Common myeloid progenitor, CD34-positive (primary cell): ENCODE measurements at regions of chr3 and their contacts with region 1.

Region 1: DNA sequence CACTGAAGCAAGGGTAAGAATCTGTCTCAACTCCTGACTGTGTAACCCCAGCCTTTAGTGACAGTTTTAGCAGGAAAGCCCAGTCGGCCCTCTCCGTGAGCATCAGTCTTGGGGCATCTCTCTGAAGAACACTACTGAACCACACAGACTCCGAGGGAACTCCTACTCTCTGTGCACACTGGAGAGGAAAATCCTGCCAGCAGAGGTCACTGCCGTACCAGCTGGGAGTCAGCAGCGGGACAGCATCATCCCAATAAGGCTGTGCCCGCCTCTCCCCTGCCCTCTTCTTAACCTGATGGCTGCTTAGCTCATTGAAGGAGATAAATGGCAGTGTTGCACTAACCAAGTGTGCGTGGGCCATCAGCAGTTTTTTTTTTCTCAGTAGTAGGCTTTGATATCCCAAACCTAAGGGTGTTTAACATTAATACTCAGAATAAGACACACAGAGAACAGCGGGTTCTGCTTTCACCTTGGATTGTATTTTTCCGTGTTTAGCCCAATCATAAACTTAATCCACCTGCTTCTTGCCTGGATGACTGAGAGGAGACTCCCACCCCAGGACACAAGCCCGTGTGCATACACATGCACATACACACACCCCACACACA is 26.6 kb upstream of the RASA2 start:
- DNase-seq: peak; percentile 82 to 91 (median 86)
- H3K4me3 ChIP-seq: no peak overlapping the region
- H3K27ac ChIP-seq: no peak overlapping the region
- H3K4me1 ChIP-seq: no peaks in the 10 kb centered on the region
- H3K27me3 ChIP-seq: no peaks in the 10 kb centered on the region

Region 2: GRCh38 chr3:141311496-141312353 is 148.5 kb before region 1 on chr3:
- CTCF ChIA-PET with region 1: interaction called, 240 read pairs
- POLR2A ChIA-PET with region 1: no interaction called
- DNase-seq: peak; percentile 98 to 99 (median 98)
- H3K4me3 ChIP-seq: peak overlapping the region; percentile 82 to 93 (median 85)
- H3K27ac ChIP-seq: peak overlapping the region; percentile 30 to 74
- H3K4me1 ChIP-seq: peaks cover 4 to 21% (median 19%) of the 10 kb centered on the region in 4 experiments
- H3K27me3 ChIP-seq: no peaks in the 10 kb centered on the region

Region 3: DNA sequence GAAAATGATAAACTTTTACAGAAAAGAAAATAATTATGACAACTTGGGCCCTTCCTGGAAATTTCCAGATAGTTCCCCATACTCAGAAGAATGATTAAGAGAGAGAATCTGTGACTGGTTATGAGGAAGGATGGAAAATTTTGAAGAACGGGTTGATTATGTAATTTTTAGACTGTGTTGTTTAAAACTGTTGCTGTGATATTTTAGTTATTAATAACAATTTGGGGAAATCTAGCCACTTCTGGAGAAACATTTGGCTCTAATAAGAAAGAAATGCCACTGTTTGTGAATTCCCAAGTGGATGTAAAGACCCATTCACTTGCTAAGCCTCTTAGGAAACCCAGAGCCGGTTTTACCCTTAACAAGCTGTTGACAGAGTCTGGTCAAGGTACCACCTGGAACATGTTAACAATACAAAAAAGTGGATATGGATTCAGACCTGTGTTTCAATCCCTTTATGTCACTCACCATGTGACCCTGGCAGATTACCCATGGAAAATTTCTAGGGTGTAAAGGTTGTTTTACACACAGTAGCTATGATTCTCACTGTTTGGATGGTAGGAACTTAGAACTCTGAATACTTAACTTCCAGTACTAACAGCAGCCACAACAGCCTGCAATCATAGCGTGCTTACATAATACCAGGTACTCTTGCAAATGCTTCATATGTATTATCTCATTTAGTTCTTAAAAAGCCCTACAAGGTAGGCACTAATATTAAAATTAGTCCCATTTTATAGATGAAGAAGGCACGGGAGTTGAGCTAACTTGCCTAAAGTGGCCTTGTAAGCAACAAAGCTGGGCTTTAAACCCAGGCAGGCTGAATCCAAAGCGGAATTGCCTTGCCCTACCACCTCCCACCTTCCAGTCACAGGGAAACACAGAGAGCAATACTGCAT is 59.9 kb before region 1 on chr3:
- CTCF ChIA-PET with region 1: no interaction called
- POLR2A ChIA-PET with region 1: no interaction called
- DNase-seq: no peak
- H3K4me3 ChIP-seq: no peak overlapping the region
- H3K27ac ChIP-seq: no peak overlapping the region
- H3K4me1 ChIP-seq: peaks cover 5 to 21% (median 11%) of the 10 kb centered on the region in 4 experiments
- H3K27me3 ChIP-seq: no peaks in the 10 kb centered on the region

Region 4: GRCh38 chr3:141476033-141476432 is 15.8 kb after region 1 on chr3:
- CTCF ChIA-PET with region 1: interaction called, 71 read pairs
- POLR2A ChIA-PET with region 1: no interaction called
- DNase-seq: peak in 2 of 3 donors; percentile 77 to 81
- H3K4me3 ChIP-seq: peak overlapping the region in 1 of 7 experiments; percentile 36
- H3K27ac ChIP-seq: no peak overlapping the region
- H3K4me1 ChIP-seq: peaks cover 13 to 28% (median 20%) of the 10 kb centered on the region in 4 experiments
- H3K27me3 ChIP-seq: no peaks in the 10 kb centered on the region

Region 5: GRCh38 chr3:141482250-141483017 is 22.2 kb after region 1 on chr3:
- CTCF ChIA-PET with region 1: interaction called, 14 read pairs
- POLR2A ChIA-PET with region 1: no interaction called
- DNase-seq: no peak
- H3K4me3 ChIP-seq: no peak overlapping the region
- H3K27ac ChIP-seq: no peak overlapping the region
- H3K4me1 ChIP-seq: peaks cover 18 to 36% (median 22%) of the 10 kb centered on the region in 4 experiments
- H3K27me3 ChIP-seq: no peaks in the 10 kb centered on the region

Region 6: GRCh38 chr3:141487521-141488252 is 27.5 kb after region 1 on chr3:
- CTCF ChIA-PET with region 1: interaction called, 14 read pairs
- POLR2A ChIA-PET with region 1: no interaction called
- DNase-seq: peak; percentile 82 to 94 (median 89)
- H3K4me3 ChIP-seq: peak overlapping the region; percentile 62 to 87 (median 79)
- H3K27ac ChIP-seq: peak overlapping the region; percentile 54 to 82
- H3K4me1 ChIP-seq: peaks cover 30 to 57% (median 37%) of the 10 kb centered on the region in 4 experiments
- H3K27me3 ChIP-seq: no peaks in the 10 kb centered on the region

Region 7: DNA sequence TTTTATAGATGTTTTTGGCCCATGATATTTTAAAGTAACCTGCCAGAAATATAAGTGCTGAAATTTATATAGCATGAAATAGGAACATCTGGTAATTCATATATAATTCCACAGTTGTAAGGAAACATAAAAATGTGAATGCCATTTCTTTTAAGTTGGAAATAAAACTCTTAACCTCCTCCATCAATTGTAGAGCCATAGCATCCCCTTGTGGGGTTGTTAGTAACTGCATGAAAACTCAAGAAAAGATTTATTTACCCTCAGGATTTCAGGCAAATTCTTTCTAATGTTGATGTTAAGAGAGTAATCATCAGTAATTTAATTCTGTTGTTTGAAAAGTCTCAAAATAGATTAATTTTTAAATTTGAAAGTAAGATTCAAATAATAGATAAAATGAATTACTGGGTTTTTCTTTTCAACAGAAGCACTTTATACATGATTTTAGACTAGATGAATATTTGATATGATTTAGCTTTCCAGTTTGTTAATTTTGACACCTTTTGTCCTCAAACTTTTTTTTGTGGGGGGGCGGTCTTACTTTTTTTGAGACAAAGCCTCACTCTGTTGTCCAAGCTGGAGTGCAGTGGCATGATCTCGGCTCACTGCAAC is 101.3 kb after region 1 on chr3:
- CTCF ChIA-PET with region 1: interaction called, 382 read pairs
- POLR2A ChIA-PET with region 1: interaction called, 3 read pairs
- DNase-seq: peak; percentile 81 to 92 (median 85)
- H3K4me3 ChIP-seq: no peak overlapping the region
- H3K27ac ChIP-seq: no peak overlapping the region
- H3K4me1 ChIP-seq: peaks cover 20 to 28% (median 24%) of the 10 kb centered on the region in 4 experiments
- H3K27me3 ChIP-seq: no peaks in the 10 kb centered on the region

Region 8: GRCh38 chr3:141570068-141570467 is 109.9 kb after region 1 on chr3:
- CTCF ChIA-PET with region 1: interaction called, 382 read pairs
- POLR2A ChIA-PET with region 1: no interaction called
- DNase-seq: no peak
- H3K4me3 ChIP-seq: no peak overlapping the region
- H3K27ac ChIP-seq: no peak overlapping the region
- H3K4me1 ChIP-seq: no peaks in the 10 kb centered on the region
- H3K27me3 ChIP-seq: no peaks in the 10 kb centered on the region